Activated T-helper 1 cell treated with anti-CD3 and anti-CD28 coated beads, Interleukin-12 subunit alpha, Interleukin-12 subunit beta, Interleukin-2, Interleukin-4 antibody, amounts not matched to agents 30 ng/mL and 10 ng/mL and 1 ng/mL, durations not matched to agents 14 hours and 24 hours and 36 hours (primary cell): ENCODE measurements at regions of chr7 and their contacts with region 1.

Region 1: GRCh38 chr7:92768501-92769393 is 67.6 kb downstream of the CDK6 start:
- DNase-seq: peak; percentile 20
- H3K4me3 Mint-ChIP-seq: peak overlapping the region; percentile 47
- H3K27ac Mint-ChIP-seq: peak overlapping the region; percentile 85
- H3K4me1 Mint-ChIP-seq: peaks cover 83% of the 10 kb centered on the region
- H3K27me3 Mint-ChIP-seq: no peaks in the 10 kb centered on the region

Region 2: GRCh38 chr7:92708111-92709042 is 60.4 kb before region 1 on chr7:
- intact Hi-C with region 1: loop called (anchors 2 kb)
- DNase-seq: no peak
- H3K4me3 Mint-ChIP-seq: no peak overlapping the region
- H3K27ac Mint-ChIP-seq: peak overlapping the region; percentile 84
- H3K4me1 Mint-ChIP-seq: peaks cover 59% of the 10 kb centered on the region
- H3K27me3 Mint-ChIP-seq: no peaks in the 10 kb centered on the region

Region 3: DNA sequence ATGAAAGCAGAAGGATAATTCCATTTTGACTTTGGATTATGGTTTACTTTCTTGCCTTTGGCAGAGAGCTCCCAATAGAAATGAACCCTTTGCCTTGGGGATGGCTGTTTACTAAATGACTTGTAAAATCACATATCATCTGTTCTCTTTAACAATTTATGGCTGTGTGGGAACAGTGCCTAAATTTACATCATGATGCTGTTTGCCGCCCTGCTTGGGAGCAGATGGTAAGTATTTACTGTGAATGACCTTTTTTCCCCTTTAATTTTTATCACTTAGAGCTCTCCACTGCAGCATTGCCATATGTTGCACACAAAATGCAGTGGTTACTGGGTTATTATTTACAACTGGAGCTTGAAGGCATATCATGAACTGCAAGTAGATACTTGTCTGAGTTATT is 444.1 kb after region 1 on chr7:
- intact Hi-C with region 1: no loop called
- DNase-seq: no peak
- H3K4me3 Mint-ChIP-seq: no peak overlapping the region
- H3K27ac Mint-ChIP-seq: no peak overlapping the region
- H3K4me1 Mint-ChIP-seq: no peaks in the 10 kb centered on the region
- H3K27me3 Mint-ChIP-seq: peaks cover 51% of the 10 kb centered on the region